Activated CD4-positive, alpha-beta memory T cell treated with anti-CD3 and anti-CD28 coated beads for 36 hours (primary cell): ENCODE measurements at regions of chr3 and their contacts with region 1.

Region 1: GRCh38 chr3:133874344-133874743 is 21.3 kb downstream of the RAB6B start:
- DNase-seq: no peak
- H3K4me3 Mint-ChIP-seq: no peak overlapping the region
- H3K27ac Mint-ChIP-seq: no peak overlapping the region
- H3K4me1 Mint-ChIP-seq: no peaks in the 10 kb centered on the region
- H3K27me3 Mint-ChIP-seq: peaks cover 21% of the 10 kb centered on the region

Region 2: DNA sequence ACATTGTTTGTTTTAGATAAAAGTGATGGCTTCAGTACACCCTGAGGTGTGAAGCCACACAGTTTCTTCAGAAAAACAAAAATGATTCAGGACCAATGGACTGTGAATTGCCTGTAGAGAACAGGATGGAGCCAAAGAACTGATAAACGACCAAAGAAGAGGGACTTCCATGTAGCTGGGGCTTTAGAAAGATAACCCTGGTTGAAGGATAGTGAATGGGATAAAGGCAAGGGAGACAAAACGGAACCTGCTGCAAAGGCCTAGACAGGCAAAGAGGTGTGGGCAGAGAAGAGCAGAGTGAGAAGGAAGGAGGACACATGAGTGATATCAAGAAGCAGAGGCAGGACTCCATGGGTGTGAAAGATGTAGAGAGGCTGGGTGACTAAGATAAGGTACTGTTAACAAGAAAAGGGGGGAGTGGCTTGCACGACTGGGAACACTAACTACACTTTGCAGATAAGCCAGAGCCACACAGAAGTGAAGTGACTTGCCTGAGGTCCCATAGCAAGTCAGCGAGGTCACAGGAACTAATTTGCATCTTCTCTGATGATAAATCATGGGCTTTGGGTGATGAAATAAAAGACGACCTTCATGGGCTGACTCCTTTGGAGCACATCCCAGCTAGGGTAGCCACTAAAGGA is 23.0 kb before region 1 on chr3:
- CTCF ChIA-PET with region 1: no interaction called
- POLR2A ChIA-PET with region 1: no interaction called
- intact Hi-C with region 1: loop called (anchors 1 kb)
- DNase-seq: peak; percentile 59
- H3K4me3 Mint-ChIP-seq: no peak overlapping the region
- H3K27ac Mint-ChIP-seq: peak overlapping the region; percentile 2
- H3K4me1 Mint-ChIP-seq: peaks cover 5% of the 10 kb centered on the region
- H3K27me3 Mint-ChIP-seq: no peaks in the 10 kb centered on the region